Activated CD8-positive, alpha-beta memory T cell treated with anti-CD3 and anti-CD28 coated beads, Interleukin-2, amount 10 ng/mL, durations not matched to agents 7 days and 5 days (primary cell): ENCODE measurements at regions of chr1 and their contacts with region 1.

Region 1: DNA sequence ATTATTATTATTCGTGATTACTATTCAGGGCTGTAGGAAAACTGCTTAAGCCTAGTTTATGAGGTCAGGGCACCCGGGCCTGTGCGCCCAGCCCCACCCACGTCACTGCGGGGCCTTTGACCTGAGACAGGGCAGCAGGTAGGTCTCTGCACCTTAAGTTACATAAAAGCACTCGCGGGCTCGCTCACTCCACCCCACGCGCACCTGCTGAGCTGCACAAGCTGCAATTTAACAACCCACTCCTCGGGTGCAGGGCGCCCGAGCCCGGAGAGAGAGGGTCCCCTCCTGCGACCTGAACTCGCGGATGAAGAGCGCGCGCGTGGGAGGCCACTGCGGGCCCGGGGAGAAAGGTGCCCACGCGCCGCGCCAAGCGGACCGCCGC is 477 bp downstream of the ICMT start:
- DNase-seq: no peak
- ATAC-seq: peak; percentile 3
- H3K4me3 Mint-ChIP-seq: peak overlapping the region; percentile 86
- H3K27ac Mint-ChIP-seq: peak overlapping the region; percentile 84
- H3K4me1 Mint-ChIP-seq: peaks cover 27% of the 10 kb centered on the region
- H3K27me3 Mint-ChIP-seq: peaks cover 19% of the 10 kb centered on the region

Region 2: DNA sequence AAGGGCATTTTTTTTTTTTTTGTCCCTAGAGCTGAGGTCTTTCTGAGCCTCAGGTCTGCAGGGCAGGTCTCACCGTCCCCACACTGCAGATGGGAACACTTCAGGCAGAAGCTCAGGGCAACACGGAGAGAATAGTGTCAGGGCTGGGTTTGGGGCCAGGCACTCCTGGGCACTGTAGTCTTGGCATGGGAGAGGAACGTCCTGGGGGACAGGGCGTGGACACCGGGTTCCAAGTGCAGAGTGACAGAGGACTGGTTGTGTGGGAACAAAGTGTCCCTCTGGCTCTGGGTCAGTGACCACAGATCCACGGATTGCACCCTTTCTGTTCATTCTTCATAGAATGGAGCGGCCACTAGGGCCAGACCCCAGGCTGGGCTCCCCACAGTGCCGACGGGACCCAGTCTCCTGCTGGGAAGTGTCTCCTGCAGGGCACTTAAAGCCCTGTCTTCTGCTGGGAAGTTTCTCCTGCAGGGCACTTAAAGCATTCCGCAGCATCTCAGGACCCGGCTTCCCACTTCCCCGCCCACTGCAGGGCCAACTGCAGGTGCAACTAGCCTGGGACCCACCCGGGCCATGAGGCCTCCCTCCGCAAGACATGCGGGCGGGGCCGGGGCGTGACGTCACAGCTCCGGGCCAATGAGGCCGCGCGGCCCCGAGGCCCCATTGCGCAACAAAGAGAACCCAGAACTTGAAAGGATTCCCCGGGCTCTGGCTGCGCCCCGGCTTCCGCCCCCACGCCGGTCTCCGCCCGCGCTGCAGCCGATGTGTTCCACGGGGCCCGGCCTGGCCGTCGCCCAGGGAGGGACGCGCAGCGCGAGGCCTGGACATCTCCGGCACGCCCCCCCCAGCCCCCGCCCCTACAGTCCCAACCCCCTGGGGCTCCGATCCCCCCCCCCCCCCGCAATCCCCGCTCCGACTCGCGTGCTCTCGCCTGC is 24.5 kb after region 1 on chr1:
- CTCF ChIA-PET with region 1: interaction called, 11 read pairs
- DNase-seq: peak; percentile 88
- ATAC-seq: peak; percentile 75
- H3K4me3 Mint-ChIP-seq: peak overlapping the region; percentile 40
- H3K27ac Mint-ChIP-seq: no peak overlapping the region
- H3K4me1 Mint-ChIP-seq: peaks cover 12% of the 10 kb centered on the region
- H3K27me3 Mint-ChIP-seq: peaks cover 15% of the 10 kb centered on the region